ENCODE measurements at regions of chr3 and their contacts with region 1.

Region 1: DNA sequence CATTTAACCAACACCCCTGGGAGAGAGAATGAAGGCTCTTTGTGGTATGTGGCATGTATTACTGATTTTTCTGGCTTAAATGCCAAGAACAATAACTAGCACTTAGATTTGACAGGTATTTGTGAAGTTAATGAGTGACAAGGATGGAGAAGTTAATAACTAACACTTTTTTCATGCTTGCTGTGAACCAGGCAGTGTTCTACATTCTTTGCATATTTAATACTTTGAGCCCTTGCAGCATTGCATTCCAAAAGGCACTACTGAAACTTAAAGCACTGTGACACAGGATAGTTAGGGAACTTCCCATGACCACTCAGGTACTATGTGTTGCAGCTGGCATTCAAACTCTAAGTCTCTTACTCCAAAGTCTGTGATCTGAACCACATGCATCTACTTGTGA is 650.6 kb downstream of the ZPLD1 start:
- DNase-seq: no peak
- ATAC-seq: no peak
- H3K4me3 ChIP-seq: no peak overlapping the region
- H3K27ac ChIP-seq: no peak overlapping the region
- H3K4me1 ChIP-seq: no peaks in the 10 kb centered on the region
- H3K27me3 ChIP-seq: no peaks in the 10 kb centered on the region
- CTCF ChIP-seq: no peak

Region 2: DNA sequence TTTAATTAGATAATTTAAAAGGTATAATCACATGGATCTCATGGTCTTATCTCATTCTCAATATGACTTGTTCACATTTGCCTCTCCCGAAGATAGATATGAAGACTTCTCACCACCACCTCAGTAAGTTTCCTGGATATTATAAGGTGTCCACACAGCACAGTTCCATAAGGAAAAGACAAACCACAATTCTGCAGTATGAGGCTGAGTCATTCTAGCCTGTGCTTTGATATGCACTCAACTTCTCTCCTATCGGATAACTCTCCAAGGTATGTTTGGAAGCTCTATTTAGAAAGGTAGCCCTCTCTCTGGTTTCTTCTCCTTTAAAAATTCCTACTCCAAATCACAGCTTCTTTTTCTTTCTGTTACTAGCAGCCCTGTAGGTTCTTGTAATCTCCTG is 37.8 kb before region 1 on chr3:
- intact Hi-C with region 1: loop called in 1 of 10 experiments (anchors 2 kb)
- DNase-seq: no peak
- ATAC-seq: no peak
- H3K4me3 ChIP-seq: no peak overlapping the region
- H3K27ac ChIP-seq: no peak overlapping the region
- H3K4me1 ChIP-seq: peaks cover 0 to 7% (median 0%) of the 10 kb centered on the region in 9 donors
- H3K27me3 ChIP-seq: no peaks in the 10 kb centered on the region
- CTCF ChIP-seq: no peak